ENCODE measurements at regions of chr1 and their contacts with region 1.

Region 1: DNA sequence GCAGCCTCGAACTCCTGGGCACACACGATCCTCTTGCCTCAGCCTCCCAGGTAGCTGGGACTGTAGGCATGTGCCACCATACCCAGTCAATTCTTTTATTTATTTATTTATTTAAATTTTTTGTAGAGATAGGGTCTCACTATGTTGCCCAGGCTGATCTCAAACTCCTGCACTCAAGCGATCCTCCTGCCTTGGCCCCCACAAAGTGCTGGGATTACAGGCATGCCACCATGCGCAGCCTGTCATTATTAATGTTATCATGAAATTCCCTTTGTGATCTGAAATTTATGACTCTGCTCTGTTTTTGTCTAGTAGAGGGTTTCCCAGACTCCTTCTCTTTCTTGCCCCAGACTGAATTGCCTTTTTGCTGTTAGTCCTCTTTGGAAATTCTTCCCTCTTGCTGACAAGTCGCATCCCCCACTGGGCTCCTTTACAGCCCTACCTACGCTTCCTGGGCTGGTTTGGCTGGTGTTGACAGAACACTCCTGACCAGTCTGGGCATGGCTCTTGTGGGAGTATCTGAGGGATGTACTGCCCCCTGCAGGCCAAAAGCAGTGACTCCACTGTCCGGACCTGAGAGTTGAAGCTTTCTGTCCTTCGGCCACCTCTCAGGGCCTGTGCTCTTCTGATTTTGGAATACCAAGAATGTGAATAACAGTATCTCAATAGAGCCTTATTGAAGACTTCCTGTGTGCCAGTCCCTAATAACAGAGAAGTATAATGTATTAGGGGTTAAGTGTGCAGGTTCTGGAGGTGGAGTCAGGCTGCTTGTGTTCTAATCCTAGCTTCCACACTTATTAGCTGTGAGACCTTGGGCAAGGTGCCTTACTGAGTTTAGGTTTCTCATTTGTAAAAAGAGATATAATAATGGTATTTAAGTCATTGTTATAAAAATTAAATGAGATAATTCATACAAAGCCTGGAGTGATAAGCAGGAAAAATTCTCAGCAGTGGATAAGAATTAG is 28.2 kb downstream of the TCEANC2 start:
- DNase-seq: peak; percentile 23
- H3K4me3 ChIP-seq: no peak overlapping the region
- H3K27ac ChIP-seq: no peak overlapping the region
- H3K27me3 ChIP-seq: no peaks in the 10 kb centered on the region
- CTCF ChIP-seq: peak; percentile 74

Region 2: GRCh38 chr1:54047384-54048305 is 33.9 kb before region 1 on chr1:
- CTCF ChIA-PET with region 1: interaction called, 12 read pairs
- POLR2A ChIA-PET with region 1: no interaction called
- DNase-seq: no peak
- H3K4me3 ChIP-seq: no peak overlapping the region
- H3K27ac ChIP-seq: no peak overlapping the region
- H3K27me3 ChIP-seq: no peaks in the 10 kb centered on the region
- CTCF ChIP-seq: no peak

Region 3: DNA sequence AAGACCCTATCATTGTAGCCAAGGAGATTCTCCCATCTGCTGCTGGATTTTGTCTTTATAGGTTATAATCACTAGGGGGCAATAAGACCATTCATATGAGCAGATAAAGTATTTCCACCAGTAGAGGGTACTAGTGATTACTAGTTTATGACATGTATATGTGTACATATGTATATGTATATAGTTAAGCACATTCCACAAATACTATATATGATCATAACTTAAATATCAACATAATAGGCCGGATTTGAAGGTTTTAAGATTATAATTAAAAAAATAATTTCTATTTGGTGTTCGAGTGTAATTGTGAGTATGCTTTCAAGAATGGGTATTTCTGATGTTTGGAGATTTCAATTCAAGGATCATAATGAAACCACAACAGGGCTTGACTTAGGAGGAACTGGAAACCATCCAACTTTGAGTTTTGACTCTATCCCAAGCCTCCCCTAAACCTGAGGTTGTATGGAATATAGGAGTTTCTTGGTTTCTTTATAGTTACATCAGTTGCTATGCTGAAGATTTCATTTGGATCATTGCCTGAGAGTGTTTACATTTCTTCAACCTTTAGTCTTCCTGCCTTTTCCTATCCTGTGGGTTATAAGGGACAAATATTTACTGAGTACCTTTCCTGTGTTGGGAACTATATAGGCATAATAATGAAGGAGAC is 11.3 kb before region 1 on chr1:
- CTCF ChIA-PET with region 1: interaction called, 10 read pairs
- POLR2A ChIA-PET with region 1: no interaction called
- DNase-seq: no peak
- H3K4me3 ChIP-seq: no peak overlapping the region
- H3K27ac ChIP-seq: no peak overlapping the region
- H3K27me3 ChIP-seq: no peaks in the 10 kb centered on the region
- CTCF ChIP-seq: peak; percentile 88

Region 4: GRCh38 chr1:54137514-54138061 is 56.0 kb after region 1 on chr1:
- CTCF ChIA-PET with region 1: no interaction called
- POLR2A ChIA-PET with region 1: no interaction called
- DNase-seq: no peak
- H3K4me3 ChIP-seq: no peak overlapping the region
- H3K27ac ChIP-seq: no peak overlapping the region
- H3K27me3 ChIP-seq: peaks cover 4% of the 10 kb centered on the region
- CTCF ChIP-seq: no peak

Region 5: GRCh38 chr1:54314696-54315095 is 233.1 kb after region 1 on chr1:
- CTCF ChIA-PET with region 1: no interaction called
- POLR2A ChIA-PET with region 1: no interaction called
- DNase-seq: no peak
- H3K4me3 ChIP-seq: no peak overlapping the region
- H3K27ac ChIP-seq: no peak overlapping the region
- H3K27me3 ChIP-seq: no peaks in the 10 kb centered on the region
- CTCF ChIP-seq: no peak

Region 6: DNA sequence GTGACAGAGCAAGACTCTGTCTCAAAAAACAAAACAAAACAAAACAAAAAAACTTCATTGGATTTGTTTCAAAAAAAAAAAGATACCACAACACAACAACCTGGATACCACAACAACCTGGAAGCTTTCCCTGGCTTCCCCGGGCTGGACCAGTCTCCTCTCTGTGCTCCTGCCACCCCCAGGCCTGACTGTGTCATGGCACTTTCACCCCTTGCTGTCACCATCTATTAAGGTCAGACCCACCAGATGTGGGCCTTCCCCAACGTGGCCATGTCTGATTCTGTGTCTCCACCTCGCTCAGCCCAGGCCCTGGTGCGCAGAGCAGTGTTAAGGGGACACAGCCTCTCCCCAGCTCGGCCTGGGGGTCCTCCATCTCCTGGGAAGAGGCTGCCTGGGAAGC is 438.1 kb after region 1 on chr1:
- CTCF ChIA-PET with region 1: no interaction called
- POLR2A ChIA-PET with region 1: no interaction called
- DNase-seq: no peak
- H3K4me3 ChIP-seq: no peak overlapping the region
- H3K27ac ChIP-seq: no peak overlapping the region
- H3K27me3 ChIP-seq: peaks cover 4% of the 10 kb centered on the region
- CTCF ChIP-seq: no peak

Measured in AG04450 (cell line).